Adrenal gland (tissue), 19 donors: ENCODE measurements at regions of chr17 and their contacts with region 1.

Region 1: GRCh38 chr17:80219013-80219762 is 945 bp downstream of the SGSH start:
- DNase-seq: peak; percentile 74 to 91 (median 86)
- H3K4me3 ChIP-seq: peak overlapping the region; percentile 14 to 92 (median 78)
- H3K27ac ChIP-seq: peak overlapping the region; percentile 32 to 95 (median 88)
- H3K4me1 ChIP-seq: peaks cover 15 to 27% of the 10 kb centered on the region in 2 donors
- H3K27me3 ChIP-seq: no peaks in the 10 kb centered on the region
- CTCF ChIP-seq: no peak
- POLR2A ChIP-seq: no peak

Region 2: DNA sequence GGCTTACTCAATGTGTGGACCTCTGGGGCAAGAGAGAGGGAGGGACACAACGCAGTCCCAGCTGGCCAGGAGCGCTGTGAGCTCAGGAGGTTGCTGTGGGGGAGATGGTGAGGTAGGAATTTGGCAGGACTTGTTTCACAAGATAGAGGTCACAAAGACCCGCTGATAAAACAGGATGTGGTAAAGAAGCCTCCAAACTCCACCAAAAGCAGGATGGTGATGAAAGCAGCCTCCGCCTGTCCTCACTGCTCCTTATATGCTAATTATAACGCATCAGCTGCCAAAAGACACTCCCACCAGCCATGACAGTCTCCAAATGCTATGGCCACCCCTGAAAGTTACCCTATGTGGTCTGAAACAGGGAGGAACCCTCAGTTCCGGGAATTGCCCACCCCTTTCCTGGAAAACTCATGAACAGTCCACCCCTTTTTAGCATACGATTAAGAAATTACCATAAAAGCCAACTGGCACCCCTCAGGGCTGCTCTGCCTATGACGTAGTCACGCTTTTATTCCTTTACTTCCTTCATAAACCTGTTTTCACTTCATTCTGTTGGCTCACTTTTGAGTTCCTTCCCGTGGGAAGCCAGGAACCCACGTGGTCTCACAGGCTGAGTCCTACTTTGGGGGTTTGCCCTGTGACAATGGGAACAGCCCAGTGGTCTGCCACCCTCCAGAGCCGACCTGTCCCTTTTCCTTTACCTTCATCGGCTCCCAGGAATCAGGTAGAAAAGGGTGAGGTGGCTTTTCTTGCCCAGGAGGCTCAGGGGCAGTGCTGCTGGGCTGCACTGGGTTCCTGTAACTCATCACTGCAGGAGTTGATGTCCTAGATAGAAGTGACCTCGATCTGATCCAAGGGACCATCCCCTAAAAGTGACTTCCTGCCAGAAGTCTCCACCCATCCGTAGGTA is 66.9 kb before region 1 on chr17:
- intact Hi-C with region 1: loop called (anchors 5 kb)
- DNase-seq: no peak
- H3K4me3 ChIP-seq: no peak overlapping the region
- H3K27ac ChIP-seq: no peak overlapping the region
- H3K4me1 ChIP-seq: peaks cover 5 to 7% of the 10 kb centered on the region in 2 donors
- H3K27me3 ChIP-seq: no peaks in the 10 kb centered on the region
- CTCF ChIP-seq: no peak
- POLR2A ChIP-seq: no peak